ENCODE measurements at regions of chr14 and their contacts with region 1.

Region 1: GRCh38 chr14:75204116-75204515 is 27.7 kb upstream of the TMED10 start:
- DNase-seq: peak; percentile 67 to 75
- H3K4me3 ChIP-seq: no peak overlapping the region
- H3K27ac ChIP-seq: peak overlapping the region; percentile 3
- H3K4me1 ChIP-seq: peaks cover 66% of the 10 kb centered on the region
- H3K27me3 ChIP-seq: no peaks in the 10 kb centered on the region
- CTCF ChIP-seq: no peak

Region 2: DNA sequence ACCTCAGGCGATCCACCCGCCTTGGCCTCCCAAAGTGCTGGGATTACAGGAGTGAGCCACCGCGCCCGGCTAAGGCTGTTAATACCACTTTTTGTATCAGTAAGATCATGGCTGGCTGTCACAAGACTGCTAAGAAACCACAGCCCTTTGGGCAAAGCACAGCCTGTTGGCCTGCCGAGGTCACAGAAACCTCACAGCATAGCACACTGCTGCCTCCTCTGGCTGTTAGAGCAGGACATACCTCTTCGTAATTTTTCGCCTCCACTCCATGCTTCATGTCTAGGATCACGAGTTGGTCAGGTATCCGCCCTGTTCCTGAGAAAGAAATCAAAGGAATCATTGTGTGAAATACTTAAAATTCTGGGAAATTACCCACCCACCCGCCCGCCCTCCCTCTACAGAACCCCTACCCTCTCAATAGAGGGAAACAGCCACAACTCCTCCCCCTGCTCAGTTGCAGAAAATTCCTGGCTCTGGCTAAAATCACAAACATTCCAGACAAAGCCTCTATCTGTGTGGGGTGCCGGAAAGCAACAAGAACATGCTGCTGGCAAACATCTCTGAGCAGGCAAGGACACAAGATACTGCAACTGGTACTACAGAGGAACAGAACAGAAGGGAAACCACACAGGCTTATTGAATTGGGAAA is 56.6 kb before region 1 on chr14:
- CTCF ChIA-PET with region 1: interaction called, 11 read pairs
- POLR2A ChIA-PET with region 1: no interaction called
- intact Hi-C with region 1: no loop called
- DNase-seq: no peak
- H3K4me3 ChIP-seq: no peak overlapping the region
- H3K27ac ChIP-seq: no peak overlapping the region
- H3K4me1 ChIP-seq: no peaks in the 10 kb centered on the region
- H3K27me3 ChIP-seq: no peaks in the 10 kb centered on the region
- CTCF ChIP-seq: no peak

Region 3: DNA sequence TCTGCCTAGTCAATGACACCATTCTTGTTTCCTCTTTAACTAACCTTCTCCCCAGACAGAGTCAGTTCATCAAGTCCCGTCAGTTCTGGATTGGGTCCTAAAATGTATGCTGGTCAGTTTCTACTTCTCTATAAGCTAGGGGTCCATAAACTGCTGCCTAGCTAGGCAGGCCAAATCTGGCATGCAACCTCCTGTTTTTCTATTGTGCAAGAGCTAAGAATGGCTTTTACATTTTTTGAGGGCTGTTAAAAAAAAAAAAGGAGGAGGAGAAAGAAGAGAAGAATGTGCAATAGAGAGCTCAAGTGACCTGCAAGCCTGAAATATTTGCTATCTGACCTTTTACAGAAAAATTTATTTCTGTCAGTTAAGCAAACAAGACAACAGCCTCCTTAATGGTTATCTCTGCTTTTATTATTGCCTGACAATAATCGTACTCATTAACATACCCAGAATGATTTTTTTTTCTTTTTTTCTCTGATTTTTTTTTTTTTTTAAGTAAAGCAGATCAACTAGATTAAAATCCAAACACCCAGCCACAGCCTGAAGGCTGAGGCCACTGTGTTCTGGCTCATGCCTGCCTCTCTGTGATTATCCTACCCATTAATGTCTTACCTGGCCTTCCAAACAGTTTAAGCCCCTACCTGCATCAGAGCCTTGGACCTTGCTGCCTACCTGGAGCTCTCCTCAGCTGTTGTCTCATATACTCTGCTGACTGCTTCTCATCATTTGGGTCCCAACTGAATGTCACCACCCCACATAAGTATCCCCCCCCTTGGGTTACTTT is 21.1 kb before region 1 on chr14:
- CTCF ChIA-PET with region 1: interaction called, 4 read pairs
- POLR2A ChIA-PET with region 1: interaction called, 6 read pairs
- intact Hi-C with region 1: loop called (anchors 1 kb)
- DNase-seq: peak; percentile 53 to 94
- H3K4me3 ChIP-seq: no peak overlapping the region
- H3K27ac ChIP-seq: peak overlapping the region; percentile 63
- H3K4me1 ChIP-seq: peaks cover 39% of the 10 kb centered on the region
- H3K27me3 ChIP-seq: no peaks in the 10 kb centered on the region
- CTCF ChIP-seq: no peak; the same call in 1 of the 2 replicates

Region 4: GRCh38 chr14:75217508-75218206 is 13.5 kb after region 1 on chr14:
- CTCF ChIA-PET with region 1: interaction called, 11 read pairs
- POLR2A ChIA-PET with region 1: interaction called, 7 read pairs
- intact Hi-C with region 1: loop called (anchors 2 kb)
- DNase-seq: no peak
- H3K4me3 ChIP-seq: no peak overlapping the region
- H3K27ac ChIP-seq: no peak overlapping the region
- H3K4me1 ChIP-seq: peaks cover 17% of the 10 kb centered on the region
- H3K27me3 ChIP-seq: no peaks in the 10 kb centered on the region
- CTCF ChIP-seq: no peak

Region 5: GRCh38 chr14:75249251-75249957 is 45.3 kb after region 1 on chr14:
- CTCF ChIA-PET with region 1: no interaction called
- POLR2A ChIA-PET with region 1: no interaction called
- intact Hi-C with region 1: loop called (anchors 1 kb)
- DNase-seq: peak; percentile 48 to 72
- H3K4me3 ChIP-seq: no peak overlapping the region; the same call in 1 of the 2 replicates
- H3K27ac ChIP-seq: peak overlapping the region; percentile 51
- H3K4me1 ChIP-seq: peaks cover 60% of the 10 kb centered on the region
- H3K27me3 ChIP-seq: no peaks in the 10 kb centered on the region
- CTCF ChIP-seq: no peak

Region 6: DNA sequence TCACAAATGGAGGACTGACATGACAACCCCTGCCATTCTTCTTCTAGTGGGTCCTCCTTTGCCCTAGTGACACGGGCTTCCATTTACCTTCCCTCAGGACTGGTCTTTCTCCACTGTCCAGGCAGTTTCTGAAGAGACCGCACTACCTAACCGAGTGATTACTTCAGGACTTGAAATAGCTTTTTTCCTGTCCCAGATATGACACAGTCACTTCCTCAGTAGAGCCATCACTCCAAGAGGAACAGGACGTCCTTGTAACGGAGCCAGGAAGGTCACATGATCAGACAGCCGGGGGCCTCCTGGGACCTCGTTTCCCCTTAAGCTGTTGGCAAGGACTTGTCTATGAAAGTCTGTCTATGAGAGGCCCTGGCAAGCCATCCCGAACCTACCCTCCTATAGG is 136.8 kb after region 1 on chr14:
- CTCF ChIA-PET with region 1: no interaction called
- POLR2A ChIA-PET with region 1: no interaction called
- intact Hi-C with region 1: no loop called
- DNase-seq: no peak
- H3K4me3 ChIP-seq: no peak overlapping the region
- H3K27ac ChIP-seq: no peak overlapping the region
- H3K4me1 ChIP-seq: no peaks in the 10 kb centered on the region
- H3K27me3 ChIP-seq: no peaks in the 10 kb centered on the region
- CTCF ChIP-seq: no peak